ENCODE measurements at regions of chr15 and their contacts with region 1.

Region 1: DNA sequence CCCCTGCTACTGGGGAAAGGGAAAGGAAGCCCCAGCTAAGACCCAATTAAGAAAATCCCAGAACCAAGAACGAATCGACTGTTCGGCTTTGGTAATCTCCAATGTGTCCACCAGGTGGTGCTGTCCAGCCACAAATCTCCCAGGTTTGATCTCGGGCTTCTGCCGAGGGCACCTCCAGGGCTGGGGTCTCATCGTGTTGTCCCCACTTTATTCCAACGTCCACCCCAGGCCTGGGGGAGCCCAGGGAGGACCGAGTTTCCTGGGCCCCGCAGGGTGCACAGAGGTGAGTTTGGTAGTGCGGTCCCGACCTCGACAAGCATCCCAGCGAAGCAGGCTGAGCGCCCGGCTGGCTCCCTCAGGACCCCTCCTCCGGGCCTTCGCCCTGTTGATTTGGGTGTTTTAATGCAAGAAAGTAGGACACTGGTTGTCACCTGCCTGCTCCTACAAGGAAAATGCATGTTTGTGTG is 185.1 kb downstream of the GOLGA6L6 start:
- DNase-seq: peak; percentile 94
- ATAC-seq: peak; percentile 68
- H3K4me3 Mint-ChIP-seq: no peak overlapping the region
- H3K27ac Mint-ChIP-seq: peak overlapping the region; percentile 20
- H3K4me1 Mint-ChIP-seq: peaks cover 7% of the 10 kb centered on the region
- H3K27me3 Mint-ChIP-seq: peaks cover 2% of the 10 kb centered on the region

Region 2: GRCh38 chr15:20344601-20345400 is 11.7 kb before region 1 on chr15:
- CTCF ChIA-PET with region 1: interaction called, 5 read pairs
- POLR2A ChIA-PET with region 1: no interaction called
- intact Hi-C with region 1: loop called in 1 of 2 experiments (anchors 1 kb)
- DNase-seq: peak; percentile 13
- ATAC-seq: no peak
- H3K4me3 Mint-ChIP-seq: no peak overlapping the region
- H3K27ac Mint-ChIP-seq: no peak overlapping the region
- H3K4me1 Mint-ChIP-seq: no peaks in the 10 kb centered on the region
- H3K27me3 Mint-ChIP-seq: no peaks in the 10 kb centered on the region

Region 3: DNA sequence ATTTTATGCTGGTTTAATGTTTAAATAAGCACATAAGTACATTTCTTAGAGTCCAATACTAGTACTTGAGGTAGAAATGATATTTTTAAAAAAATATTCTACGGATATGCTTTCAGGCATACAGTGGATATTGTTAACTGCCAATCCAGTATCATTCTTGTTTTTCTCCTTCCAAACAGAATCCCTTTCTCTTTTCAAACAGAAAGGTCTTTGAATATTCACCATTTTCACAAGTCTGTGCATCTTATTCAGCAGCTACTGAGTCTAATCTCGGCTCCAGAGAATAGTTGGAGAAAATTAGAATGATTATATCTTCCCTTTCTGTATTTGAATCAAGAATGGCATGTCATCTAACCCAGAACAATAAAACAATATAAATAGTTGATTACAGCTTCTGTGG is 10.6 kb after region 1 on chr15:
- CTCF ChIA-PET with region 1: interaction called, 21 read pairs
- POLR2A ChIA-PET with region 1: interaction called, 3 read pairs
- intact Hi-C with region 1: loop called (anchors 1 to 2 kb)
- DNase-seq: no peak
- ATAC-seq: no peak
- H3K4me3 Mint-ChIP-seq: no peak overlapping the region
- H3K27ac Mint-ChIP-seq: no peak overlapping the region
- H3K4me1 Mint-ChIP-seq: no peaks in the 10 kb centered on the region
- H3K27me3 Mint-ChIP-seq: no peaks in the 10 kb centered on the region

Region 4: DNA sequence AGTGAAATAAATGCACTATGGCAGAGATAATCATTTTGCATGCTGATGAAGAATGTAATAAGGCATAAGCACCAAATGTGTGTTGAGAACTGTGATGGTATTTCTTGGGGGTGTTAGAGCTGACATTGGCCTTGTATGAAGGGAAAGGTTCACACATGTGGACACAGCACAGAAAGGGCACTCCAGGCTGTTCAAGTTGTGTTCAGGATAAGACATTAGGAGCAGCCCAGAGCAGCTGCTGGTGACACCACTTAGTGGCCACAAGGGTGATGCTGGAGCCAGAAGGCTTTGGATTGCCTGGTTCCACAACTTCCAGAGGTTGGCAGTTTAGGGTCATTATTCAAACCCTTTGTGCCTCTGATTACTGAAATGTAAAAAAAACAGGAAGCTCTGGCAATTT is 29.7 kb after region 1 on chr15:
- CTCF ChIA-PET with region 1: interaction called, 5 read pairs
- POLR2A ChIA-PET with region 1: no interaction called
- intact Hi-C with region 1: loop called in 1 of 2 experiments (anchors 5 kb)
- DNase-seq: no peak
- ATAC-seq: no peak
- H3K4me3 Mint-ChIP-seq: no peak overlapping the region
- H3K27ac Mint-ChIP-seq: no peak overlapping the region
- H3K4me1 Mint-ChIP-seq: no peaks in the 10 kb centered on the region
- H3K27me3 Mint-ChIP-seq: no peaks in the 10 kb centered on the region

Region 5: DNA sequence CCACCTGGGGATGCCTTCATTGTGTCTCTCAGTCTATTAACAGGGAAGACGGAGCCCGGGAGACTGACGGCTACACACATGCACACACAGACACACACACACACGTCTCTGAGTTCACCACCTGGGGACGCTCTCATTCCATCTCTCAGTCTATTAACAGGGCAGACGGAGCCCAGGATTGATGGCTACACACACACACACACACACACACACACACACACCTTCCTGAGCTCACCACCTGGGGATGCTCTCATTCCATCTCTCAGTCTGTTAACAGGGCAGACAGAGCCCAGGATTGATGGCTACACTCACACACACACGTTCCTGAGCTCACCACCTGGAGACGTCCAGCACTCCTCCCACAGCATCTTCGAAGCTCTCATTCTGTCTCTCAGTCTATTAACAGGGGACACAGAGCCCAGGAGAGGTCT is 1867.8 kb after region 1 on chr15:
- CTCF ChIA-PET with region 1: interaction called, 161 read pairs
- POLR2A ChIA-PET with region 1: no interaction called
- intact Hi-C with region 1: loop called (anchors 1 kb)
- DNase-seq: peak; percentile 50
- ATAC-seq: no peak
- H3K4me3 Mint-ChIP-seq: no peak overlapping the region
- H3K27ac Mint-ChIP-seq: peak overlapping the region; percentile 5
- H3K4me1 Mint-ChIP-seq: peaks cover 31% of the 10 kb centered on the region
- H3K27me3 Mint-ChIP-seq: peaks cover 3% of the 10 kb centered on the region

Region 6: GRCh38 chr15:22262613-22263020 is 1906.1 kb after region 1 on chr15:
- CTCF ChIA-PET with region 1: interaction called, 5 read pairs
- POLR2A ChIA-PET with region 1: no interaction called
- intact Hi-C with region 1: loop called in 1 of 2 experiments (anchors 2 kb)
- DNase-seq: peak; percentile 67
- ATAC-seq: no peak
- H3K4me3 Mint-ChIP-seq: no peak overlapping the region
- H3K27ac Mint-ChIP-seq: no peak overlapping the region
- H3K4me1 Mint-ChIP-seq: peaks cover 23% of the 10 kb centered on the region
- H3K27me3 Mint-ChIP-seq: peaks cover 5% of the 10 kb centered on the region

Measured in activated CD4-positive, alpha-beta T cell treated with anti-CD3 and anti-CD28 coated beads for 36 hours (primary cell).